H1 (cell line): ENCODE measurements at regions of chr9 and their contacts with region 1.

Region 1: DNA sequence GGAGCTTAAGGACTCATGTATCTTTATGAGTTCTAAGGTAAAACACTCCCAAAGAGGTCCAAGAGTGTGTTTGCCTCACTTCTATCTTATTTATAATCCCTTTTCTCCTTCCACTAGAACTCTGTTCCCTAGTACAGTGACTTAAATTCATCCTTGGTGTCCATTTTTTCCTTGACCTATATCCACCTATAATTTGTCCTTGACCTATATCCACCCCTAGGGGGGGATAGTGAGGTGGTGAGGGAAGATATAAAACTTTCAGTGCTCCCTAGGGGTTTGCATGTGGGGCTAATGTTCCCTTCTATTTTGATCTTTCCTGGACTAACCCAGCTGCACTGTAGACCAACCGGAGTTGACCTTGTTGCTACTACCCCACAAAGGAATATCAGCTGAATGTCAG is 83.5 kb upstream of the GNAQ start:
- DNase-seq: no peak
- H3K4me3 ChIP-seq: no peak overlapping the region
- H3K27ac ChIP-seq: no peak overlapping the region
- H3K4me1 ChIP-seq: no peaks in the 10 kb centered on the region
- H3K27me3 ChIP-seq: no peaks in the 10 kb centered on the region
- CTCF ChIP-seq: peak in 2 of 3 experiments; percentile 48 to 68; a peak in 2 of 4 replicates
- EP300 ChIP-seq: no peak
- POLR2A ChIP-seq: no peak
- RAD21 ChIP-seq: peak; percentile 35 to 46

Region 2: DNA sequence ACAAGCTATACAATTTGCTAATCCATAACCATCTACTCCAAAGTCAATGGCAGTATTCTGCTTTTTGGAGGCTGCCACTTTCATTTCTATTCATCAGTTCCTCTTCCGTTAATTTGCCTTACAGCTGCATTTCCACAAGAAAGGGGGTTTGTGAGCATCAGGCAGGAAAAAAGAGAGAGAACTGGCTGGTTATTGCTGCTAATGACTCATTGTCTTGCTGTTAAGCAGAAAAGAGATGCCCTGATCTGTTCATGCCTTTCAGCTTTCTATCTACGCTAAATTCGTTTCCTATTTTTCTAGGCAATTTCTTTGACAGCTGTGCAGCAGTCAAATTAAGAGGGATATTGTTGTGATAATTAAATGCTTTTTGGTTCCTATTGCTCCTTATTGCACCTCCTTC is 17.5 kb before region 1 on chr9:
- CTCF ChIA-PET with region 1: interaction called, 38 read pairs
- POLR2A ChIA-PET with region 1: no interaction called
- DNase-seq: no peak
- H3K4me3 ChIP-seq: no peak overlapping the region
- H3K27ac ChIP-seq: no peak overlapping the region
- H3K4me1 ChIP-seq: peaks cover 0 to 4% (median 0%) of the 10 kb centered on the region in 4 experiments; a peak in 1 of 7 replicates
- H3K27me3 ChIP-seq: no peaks in the 10 kb centered on the region
- CTCF ChIP-seq: no peak
- EP300 ChIP-seq: no peak
- POLR2A ChIP-seq: no peak
- RAD21 ChIP-seq: no peak

Region 3: GRCh38 chr9:78103971-78104433 is 11.1 kb before region 1 on chr9:
- CTCF ChIA-PET with region 1: interaction called, 38 read pairs
- POLR2A ChIA-PET with region 1: no interaction called
- DNase-seq: no peak
- H3K4me3 ChIP-seq: no peak overlapping the region
- H3K27ac ChIP-seq: no peak overlapping the region
- H3K4me1 ChIP-seq: no peaks in the 10 kb centered on the region
- H3K27me3 ChIP-seq: no peaks in the 10 kb centered on the region
- CTCF ChIP-seq: no peak
- EP300 ChIP-seq: no peak
- POLR2A ChIP-seq: no peak
- RAD21 ChIP-seq: no peak

Region 4: GRCh38 chr9:78149702-78150291 is 34.7 kb after region 1 on chr9:
- CTCF ChIA-PET with region 1: no interaction called
- POLR2A ChIA-PET with region 1: no interaction called
- DNase-seq: no peak
- H3K4me3 ChIP-seq: no peak overlapping the region
- H3K27ac ChIP-seq: no peak overlapping the region
- H3K4me1 ChIP-seq: peaks cover 0 to 3% (median 1%) of the 10 kb centered on the region in 4 experiments; a peak in 2 of 7 replicates
- H3K27me3 ChIP-seq: no peaks in the 10 kb centered on the region
- CTCF ChIP-seq: no peak
- EP300 ChIP-seq: no peak
- POLR2A ChIP-seq: no peak
- RAD21 ChIP-seq: no peak